ENCODE measurements at regions of chr15 and their contacts with region 1.

Region 1: DNA sequence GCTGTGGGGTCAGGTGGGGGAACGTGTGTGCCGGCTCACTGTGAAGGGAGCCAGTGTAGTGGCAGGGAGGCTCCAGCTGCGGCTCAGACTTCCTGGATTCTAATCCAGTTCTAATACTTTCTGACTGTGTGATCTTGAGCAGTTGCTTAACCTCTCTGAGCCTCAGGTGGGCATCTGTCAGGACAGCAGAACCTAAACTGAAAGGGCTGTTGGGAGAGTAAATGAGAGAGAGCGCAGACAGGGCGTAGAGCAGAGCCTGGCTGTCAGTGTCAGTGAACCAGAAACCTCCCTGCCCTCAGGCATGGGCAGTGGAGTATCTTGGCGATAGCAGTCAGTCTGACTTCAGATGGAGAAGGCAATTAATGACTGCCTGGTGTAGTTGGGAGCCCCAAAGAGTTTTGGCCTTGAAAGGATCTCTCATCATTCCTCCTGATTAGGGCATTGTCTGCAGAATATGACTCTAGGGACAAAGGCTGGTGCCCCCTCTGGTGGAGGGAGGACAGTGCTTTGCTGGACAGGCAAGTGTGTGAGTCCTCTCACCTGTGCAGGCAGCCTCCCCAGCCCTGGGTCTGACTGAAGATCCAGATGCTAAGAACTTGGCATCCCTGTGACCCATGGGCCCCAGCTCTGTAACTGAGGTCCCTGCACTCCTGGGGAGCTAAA is 9.6 kb downstream of the KBTBD13 start:
- DNase-seq: peak; percentile 78
- ATAC-seq: peak; percentile 55
- H3K4me3 Mint-ChIP-seq: no peak overlapping the region
- H3K27ac Mint-ChIP-seq: no peak overlapping the region
- H3K4me1 Mint-ChIP-seq: peaks cover 73% of the 10 kb centered on the region
- H3K27me3 Mint-ChIP-seq: peaks cover 10% of the 10 kb centered on the region
- CTCF ChIP-seq: peak; percentile 49; the same call in 1 of the 2 replicates

Region 2: DNA sequence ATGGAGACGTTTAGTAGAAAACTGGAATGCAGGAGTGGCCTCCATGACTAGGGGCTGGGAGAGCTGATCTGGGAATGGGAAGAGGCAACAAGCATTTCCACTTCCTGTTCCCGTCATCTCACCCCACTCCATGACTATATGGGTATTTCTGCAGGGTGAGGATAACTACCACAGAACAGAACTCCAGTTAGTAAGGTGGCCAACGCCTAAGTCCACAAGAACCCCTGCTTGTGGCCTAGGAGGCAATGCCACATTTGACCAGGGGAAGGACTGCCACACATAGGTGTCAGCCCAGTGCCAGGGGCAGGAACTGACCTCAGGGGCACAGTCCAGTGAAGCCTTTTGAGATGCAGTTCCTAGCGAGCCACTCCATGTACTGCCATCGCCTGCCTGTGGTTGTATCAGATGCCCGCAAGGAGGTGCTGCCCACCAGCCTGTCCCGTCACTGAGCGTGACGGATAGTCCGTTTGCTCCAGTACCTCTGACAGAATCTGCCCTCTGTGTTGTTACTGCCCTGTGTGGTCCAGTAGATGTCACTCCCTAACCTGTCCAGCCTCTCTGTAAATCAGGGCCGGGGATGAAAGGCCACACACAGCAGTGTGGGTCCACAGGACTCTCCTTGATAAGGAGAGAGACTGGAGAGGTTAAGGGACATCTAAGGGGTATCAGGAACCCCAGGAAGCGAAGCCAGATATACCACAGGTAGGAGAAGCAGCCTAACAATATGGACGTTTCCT is 53.2 kb before region 1 on chr15:
- CTCF ChIA-PET with region 1: interaction called, 32 read pairs
- POLR2A ChIA-PET with region 1: interaction called, 4 read pairs
- DNase-seq: peak; percentile 83
- ATAC-seq: peak; percentile 86
- H3K4me3 Mint-ChIP-seq: peak overlapping the region; percentile 14; the same call in 1 of the 2 replicates
- H3K27ac Mint-ChIP-seq: no peak overlapping the region
- H3K4me1 Mint-ChIP-seq: peaks cover 18% of the 10 kb centered on the region
- H3K27me3 Mint-ChIP-seq: peaks cover 6% of the 10 kb centered on the region
- CTCF ChIP-seq: peak; percentile 51

Region 3: GRCh38 chr15:65049418-65049840 is 36.7 kb before region 1 on chr15:
- CTCF ChIA-PET with region 1: interaction called, 193 read pairs
- POLR2A ChIA-PET with region 1: interaction called, 3 read pairs
- DNase-seq: peak; percentile 91
- ATAC-seq: peak; percentile 97
- H3K4me3 Mint-ChIP-seq: peak overlapping the region; percentile 48
- H3K27ac Mint-ChIP-seq: no peak overlapping the region
- H3K4me1 Mint-ChIP-seq: peaks cover 11% of the 10 kb centered on the region; the same call in 1 of the 2 replicates
- H3K27me3 Mint-ChIP-seq: peaks cover 4% of the 10 kb centered on the region; the same call in 1 of the 2 replicates
- CTCF ChIP-seq: no peak

Region 4: DNA sequence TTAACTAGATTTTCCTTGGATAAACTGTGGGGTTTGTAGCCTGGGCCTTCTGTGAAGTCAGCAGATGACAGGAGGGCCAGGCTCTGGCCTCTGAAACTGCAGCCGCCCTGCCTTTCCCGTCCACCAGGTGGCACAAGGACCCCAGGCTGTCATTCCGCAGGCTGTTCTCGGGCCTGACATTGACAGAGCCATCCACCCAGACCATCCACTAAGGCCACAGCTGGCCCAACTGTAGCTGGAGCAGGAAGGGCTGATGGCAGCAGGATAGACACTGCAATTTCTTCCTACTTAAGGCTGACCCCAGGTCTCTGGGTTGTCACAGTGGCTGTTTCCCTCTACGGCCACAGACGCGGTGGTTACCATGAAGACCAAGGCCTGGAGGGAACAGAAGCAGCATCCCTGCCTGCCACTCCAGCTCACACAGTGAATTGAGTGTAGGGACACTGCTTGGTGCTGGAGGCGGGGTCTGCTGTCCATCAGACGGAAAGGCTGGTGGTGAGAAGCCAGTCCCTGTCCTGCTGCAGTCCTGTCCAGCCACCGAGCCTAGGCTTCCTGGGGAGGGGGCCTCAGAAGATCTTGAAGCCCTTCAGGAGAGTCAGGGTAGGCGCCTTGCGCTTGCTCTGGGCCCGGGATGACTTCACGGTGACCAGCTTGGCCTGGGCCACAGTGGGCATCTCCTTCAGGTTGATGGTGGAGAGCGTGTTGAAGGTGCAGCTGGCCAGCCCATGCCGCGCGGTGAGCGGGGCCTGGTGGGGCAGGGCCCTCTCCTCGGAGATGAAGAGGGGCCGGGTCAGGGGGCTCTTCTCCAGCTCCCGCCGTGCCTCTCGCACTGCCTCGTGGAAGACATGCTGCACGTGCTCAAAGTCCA is 31.6 kb before region 1 on chr15:
- CTCF ChIA-PET with region 1: interaction called, 193 read pairs
- POLR2A ChIA-PET with region 1: interaction called, 3 read pairs
- DNase-seq: peak; percentile 86
- ATAC-seq: peak; percentile 82
- H3K4me3 Mint-ChIP-seq: no peak overlapping the region
- H3K27ac Mint-ChIP-seq: no peak overlapping the region
- H3K4me1 Mint-ChIP-seq: peaks cover 4% of the 10 kb centered on the region; the same call in 1 of the 2 replicates
- H3K27me3 Mint-ChIP-seq: peaks cover 2% of the 10 kb centered on the region; the same call in 1 of the 2 replicates
- CTCF ChIP-seq: peak; percentile 83

Region 5: DNA sequence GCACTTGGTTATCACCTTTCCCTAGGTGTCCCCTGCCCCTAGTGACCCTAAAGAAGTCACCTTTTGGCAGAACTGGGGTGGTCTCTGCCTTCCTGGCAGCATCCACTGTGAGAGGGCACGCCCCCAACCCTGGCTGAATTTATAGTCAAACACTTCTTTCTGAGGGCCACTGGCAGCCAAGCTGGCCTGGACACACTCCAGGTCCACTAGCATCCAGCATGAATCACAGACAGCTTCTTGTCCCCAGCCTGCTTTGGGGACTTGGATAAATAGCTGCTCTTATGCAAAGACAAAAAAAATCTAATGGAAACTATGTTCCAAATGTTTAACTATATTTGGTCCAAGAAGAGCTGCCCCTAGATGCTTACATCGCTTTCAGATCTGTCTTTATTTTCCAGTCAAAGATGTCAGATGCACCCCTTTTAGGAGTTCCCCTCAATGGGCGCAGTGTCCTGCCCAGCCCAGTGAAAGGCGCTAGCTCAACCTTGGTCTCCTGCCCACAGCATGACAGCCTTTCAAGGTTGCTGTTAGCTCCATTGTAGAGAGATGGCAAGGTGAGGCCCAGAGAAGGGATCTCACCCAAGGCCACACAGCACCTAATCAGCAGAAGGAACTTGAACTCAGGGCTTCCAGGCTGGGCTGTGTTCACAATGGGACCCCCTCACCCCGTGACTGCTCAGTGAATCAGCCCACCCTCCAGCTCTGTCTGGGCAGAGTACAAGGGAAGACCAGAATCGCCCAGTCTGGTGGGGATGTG is 25.3 kb before region 1 on chr15:
- CTCF ChIA-PET with region 1: interaction called, 193 read pairs
- POLR2A ChIA-PET with region 1: interaction called, 11 read pairs
- DNase-seq: no peak
- ATAC-seq: no peak
- H3K4me3 Mint-ChIP-seq: no peak overlapping the region
- H3K27ac Mint-ChIP-seq: no peak overlapping the region
- H3K4me1 Mint-ChIP-seq: peaks cover 8% of the 10 kb centered on the region
- H3K27me3 Mint-ChIP-seq: no peaks in the 10 kb centered on the region
- CTCF ChIP-seq: no peak

Region 6: DNA sequence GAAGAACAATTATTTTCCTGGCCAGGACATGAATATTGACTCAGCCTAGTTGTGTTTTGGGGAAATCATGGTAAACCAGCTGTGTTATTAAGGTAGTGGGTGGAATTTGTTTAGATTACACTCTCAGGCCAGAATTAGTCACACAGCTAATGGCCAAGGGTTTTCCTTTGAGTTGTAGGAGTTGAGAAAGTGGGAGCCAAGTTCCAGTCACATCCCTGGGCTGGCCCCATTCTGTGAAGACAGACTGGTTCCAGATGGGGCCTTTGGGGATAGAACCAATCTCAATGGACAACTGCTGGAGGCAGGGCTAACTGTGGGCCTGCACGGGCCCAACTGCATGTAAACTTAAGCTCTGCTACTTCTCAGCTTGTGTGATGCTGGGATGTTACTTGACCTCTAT is 17.0 kb before region 1 on chr15:
- CTCF ChIA-PET with region 1: interaction called, 98 read pairs
- POLR2A ChIA-PET with region 1: interaction called, 11 read pairs
- DNase-seq: no peak
- ATAC-seq: no peak
- H3K4me3 Mint-ChIP-seq: no peak overlapping the region
- H3K27ac Mint-ChIP-seq: no peak overlapping the region
- H3K4me1 Mint-ChIP-seq: peaks cover 38% of the 10 kb centered on the region
- H3K27me3 Mint-ChIP-seq: peaks cover 21% of the 10 kb centered on the region
- CTCF ChIP-seq: no peak

Region 7: DNA sequence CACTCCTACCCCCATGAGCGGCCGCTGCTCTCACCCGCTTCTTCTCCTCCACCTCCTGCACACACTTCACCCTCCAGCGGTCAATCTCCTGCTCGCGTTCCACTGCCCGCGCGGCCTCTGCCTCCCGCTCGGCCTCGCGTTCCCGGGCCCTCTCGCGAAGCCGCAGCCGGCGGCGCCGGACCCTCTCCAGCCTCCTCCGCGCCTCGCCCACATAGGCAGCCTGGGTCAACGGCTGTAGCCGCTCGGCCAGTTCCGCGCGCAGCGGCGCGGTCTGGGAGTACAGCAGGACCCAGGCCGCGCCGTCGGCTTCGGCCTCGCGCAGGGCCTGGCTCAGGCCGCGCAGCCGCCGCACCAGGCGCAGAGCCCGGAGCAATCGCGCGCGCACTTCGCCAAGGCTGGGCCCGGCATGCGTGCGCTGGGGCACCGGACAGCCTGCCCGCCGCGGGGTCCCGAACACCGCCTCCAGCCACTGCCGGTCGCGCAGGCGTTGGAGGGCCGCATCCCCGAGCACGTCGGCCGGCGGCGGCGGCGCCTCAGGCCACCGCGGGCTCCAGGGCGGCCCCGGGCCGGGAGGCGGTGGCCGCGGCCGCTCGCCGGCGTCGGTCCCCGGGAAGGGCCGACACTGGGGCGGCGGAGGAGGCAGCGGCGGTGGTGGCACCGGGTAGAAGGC is 46.9 kb after region 1 on chr15:
- CTCF ChIA-PET with region 1: no interaction called
- POLR2A ChIA-PET with region 1: no interaction called
- DNase-seq: peak; percentile 65
- ATAC-seq: peak; percentile 85
- H3K4me3 Mint-ChIP-seq: peak overlapping the region; percentile 80
- H3K27ac Mint-ChIP-seq: no peak overlapping the region
- H3K4me1 Mint-ChIP-seq: peaks cover 16% of the 10 kb centered on the region
- H3K27me3 Mint-ChIP-seq: peaks cover 10% of the 10 kb centered on the region
- CTCF ChIP-seq: no peak

Region 8: GRCh38 chr15:65184868-65185738 is 99.0 kb after region 1 on chr15 and contains the start of gene CLPX:
- CTCF ChIA-PET with region 1: interaction called, 11 read pairs
- POLR2A ChIA-PET with region 1: no interaction called
- DNase-seq: peak; percentile 86
- ATAC-seq: peak; percentile 88
- H3K4me3 Mint-ChIP-seq: peak within 1 kb of the TSS; percentile 96
- H3K27ac Mint-ChIP-seq: peak within 1 kb of the TSS; percentile 95
- H3K4me1 Mint-ChIP-seq: peaks cover 17% of the 10 kb centered on the region
- H3K27me3 Mint-ChIP-seq: no peaks in the 10 kb centered on the region
- CTCF ChIP-seq: no peak
- total RNA-seq, gene CLPX: 57.9 to 68.7 TPM (median 61.5 TPM) in 3 replicates

Measured in WTC11 (cell line).